HCT116 (cell line): ENCODE measurements at regions of chr3 and their contacts with region 1.

Region 1: GRCh38 chr3:8741581-8742261 is 8.1 kb downstream of the CAV3 start:
- DNase-seq: peak; percentile 42
- ATAC-seq: peak; percentile 70
- H3K4me3 ChIP-seq: peak overlapping the region; percentile 11 to 52
- H3K27ac ChIP-seq: peak overlapping the region; percentile 65; the same call in 1 of the 2 replicates
- H3K4me1 ChIP-seq: peaks cover 41 to 69% of the 10 kb centered on the region in 2 experiments
- H3K27me3 ChIP-seq: no peaks in the 10 kb centered on the region
- CTCF ChIP-seq: no peak
- POLR2A ChIP-seq: no peak
- RAD21 ChIP-seq: no peak

Region 2: DNA sequence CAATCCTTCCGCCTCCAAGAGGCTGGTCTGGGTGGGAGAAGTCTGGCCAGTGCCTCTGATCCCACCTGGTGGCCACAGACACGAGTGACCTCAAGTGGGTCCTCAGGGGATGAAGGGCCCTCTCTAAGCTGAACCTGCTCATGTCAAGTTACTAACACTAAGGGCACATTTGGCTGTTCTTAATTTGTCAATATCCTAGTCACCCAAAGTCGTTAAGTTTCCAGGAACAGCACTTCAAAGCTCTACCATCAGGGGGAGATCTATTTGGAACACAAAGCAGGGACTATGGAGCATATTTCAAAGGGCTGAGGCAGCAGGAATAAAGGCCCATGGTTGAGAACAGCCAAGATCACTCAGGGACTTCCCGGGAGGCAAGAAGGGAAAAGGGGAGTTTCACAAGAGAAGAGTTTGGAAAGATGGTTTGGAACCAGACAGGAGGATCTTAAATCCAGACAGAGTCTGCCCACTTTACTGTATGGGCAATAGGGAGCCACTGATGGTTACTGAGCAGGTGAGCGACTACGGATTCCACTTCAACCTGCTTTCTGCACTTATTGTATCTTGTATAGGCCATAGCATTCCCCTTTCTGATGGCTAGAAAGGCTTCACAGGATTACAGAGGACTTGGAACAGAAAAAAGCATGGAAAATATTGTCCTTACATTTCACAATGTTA is 14.0 kb after region 1 on chr3:
- CTCF ChIA-PET with region 1: interaction called, 10 read pairs
- POLR2A ChIA-PET with region 1: no interaction called
- RAD21 ChIA-PET with region 1: no interaction called
- intact Hi-C with region 1: no loop called
- DNase-seq: peak; percentile 37
- ATAC-seq: peak; percentile 84
- H3K4me3 ChIP-seq: no peak overlapping the region
- H3K27ac ChIP-seq: no peak overlapping the region
- H3K4me1 ChIP-seq: peaks cover 0 to 9% of the 10 kb centered on the region in 2 experiments; a peak in 1 of 4 replicates
- H3K27me3 ChIP-seq: no peaks in the 10 kb centered on the region
- CTCF ChIP-seq: peak; percentile 30 to 66 (median 60); a peak in 5 of 6 replicates
- POLR2A ChIP-seq: no peak
- RAD21 ChIP-seq: peak; percentile 43; the same call in 1 of the 2 replicates

Region 3: GRCh38 chr3:10189557-10190354 is 1448.0 kb after region 1 on chr3:
- CTCF ChIA-PET with region 1: no interaction called
- POLR2A ChIA-PET with region 1: no interaction called
- RAD21 ChIA-PET with region 1: no interaction called
- intact Hi-C with region 1: no loop called
- DNase-seq: no peak
- ATAC-seq: no peak
- H3K4me3 ChIP-seq: no peak overlapping the region
- H3K27ac ChIP-seq: no peak overlapping the region
- H3K4me1 ChIP-seq: peaks cover 38 to 43% of the 10 kb centered on the region in 2 experiments
- H3K27me3 ChIP-seq: no peaks in the 10 kb centered on the region
- CTCF ChIP-seq: no peak
- POLR2A ChIP-seq: no peak
- RAD21 ChIP-seq: no peak